ENCODE measurements at regions of chr17 and their contacts with region 1.

Region 1: DNA sequence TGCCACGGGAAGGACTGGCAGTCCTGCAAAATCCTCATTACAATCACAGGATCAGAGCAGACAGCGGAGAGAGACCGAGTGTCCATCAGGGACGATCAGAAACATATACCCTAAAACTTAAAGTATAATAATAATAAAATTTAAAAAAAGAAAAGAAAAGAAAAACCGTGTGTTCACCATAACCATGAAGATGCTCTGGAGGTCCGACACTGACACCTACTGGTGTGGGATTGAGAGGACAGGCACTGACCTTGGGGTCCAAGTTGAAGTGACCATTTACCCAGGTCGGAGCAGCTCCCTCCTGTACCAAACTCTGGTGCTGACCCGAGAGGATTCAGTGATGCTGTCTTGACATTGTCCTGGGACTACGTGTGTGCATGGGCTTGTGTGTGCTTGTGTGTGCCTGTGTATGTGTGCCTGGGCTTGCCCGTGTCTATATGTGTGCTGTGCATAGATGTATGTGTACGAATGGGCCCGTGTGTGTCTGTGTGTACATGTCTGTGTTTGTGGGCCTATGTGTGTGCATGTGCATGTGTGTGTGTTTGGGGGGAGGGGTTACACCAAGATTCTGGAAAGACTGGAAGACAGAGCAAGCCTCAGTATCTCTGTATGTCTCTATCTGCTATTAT is 10.0 kb upstream of the CD300LD start:
- DNase-seq: peak; percentile 29
- H3K4me3 ChIP-seq: no peak overlapping the region
- H3K27ac ChIP-seq: no peak overlapping the region
- H3K4me1 ChIP-seq: no peaks in the 10 kb centered on the region
- H3K27me3 ChIP-seq: no peaks in the 10 kb centered on the region
- CTCF ChIP-seq: peak; percentile 57

Region 2: GRCh38 chr17:73957564-73957963 is 644.5 kb before region 1 on chr17:
- intact Hi-C with region 1: no loop called
- DNase-seq: peak; percentile 58
- H3K4me3 ChIP-seq: no peak overlapping the region
- H3K27ac ChIP-seq: peak overlapping the region; percentile 84
- H3K4me1 ChIP-seq: peaks cover 4% of the 10 kb centered on the region
- H3K27me3 ChIP-seq: no peaks in the 10 kb centered on the region
- CTCF ChIP-seq: no peak

Region 3: DNA sequence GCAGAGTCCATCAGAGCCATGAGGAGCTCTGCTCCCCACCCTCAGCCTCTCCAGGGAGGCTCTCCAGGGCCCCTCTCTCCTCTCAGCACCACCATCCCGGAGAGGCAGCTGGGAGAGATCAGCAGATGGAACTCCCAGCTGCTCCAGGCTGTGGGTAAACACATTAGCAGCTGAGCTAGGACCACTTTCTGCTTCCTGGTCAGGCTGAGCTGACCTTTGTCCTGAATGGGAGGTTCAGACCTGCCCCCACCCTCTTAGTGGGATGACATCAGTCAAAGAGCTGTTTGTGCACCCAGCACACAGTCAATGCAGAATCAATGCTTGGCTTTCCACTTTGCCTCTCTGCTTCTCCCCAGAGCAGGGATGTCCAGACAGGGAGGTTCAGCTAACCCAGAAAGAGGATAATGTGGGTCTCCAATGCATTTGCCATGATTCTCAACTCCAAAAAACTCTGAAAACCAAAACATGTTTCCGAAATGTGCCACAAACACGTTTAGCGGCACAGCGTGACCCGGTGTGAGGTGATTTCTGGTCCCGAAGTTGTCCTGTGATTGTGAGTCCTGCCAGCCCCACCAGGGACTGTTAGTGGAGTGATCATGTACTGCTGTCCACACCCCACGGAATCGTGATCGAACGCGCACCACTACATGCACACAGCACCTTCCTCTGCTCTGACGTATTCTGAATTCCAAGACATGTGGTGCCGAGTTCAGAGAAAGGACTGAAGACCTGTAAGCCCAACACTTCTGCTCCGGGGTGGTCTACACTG is 228.0 kb before region 1 on chr17:
- intact Hi-C with region 1: loop called (anchors 5 kb)
- DNase-seq: peak; percentile 77
- H3K4me3 ChIP-seq: no peak overlapping the region
- H3K27ac ChIP-seq: peak overlapping the region; percentile 35
- H3K4me1 ChIP-seq: peaks cover 4% of the 10 kb centered on the region
- H3K27me3 ChIP-seq: no peaks in the 10 kb centered on the region
- CTCF ChIP-seq: no peak

Region 4: GRCh38 chr17:74545843-74546230 is 56.2 kb before region 1 on chr17 and contains the start of gene CD300C:
- intact Hi-C with region 1: loop called (anchors 5 kb)
- DNase-seq: peak; percentile 25
- H3K4me3 ChIP-seq: no peak within 1 kb of the TSS
- H3K27ac ChIP-seq: no peak within 1 kb of the TSS
- H3K4me1 ChIP-seq: no peaks in the 10 kb centered on the region
- H3K27me3 ChIP-seq: no peaks in the 10 kb centered on the region
- CTCF ChIP-seq: no peak
- total RNA-seq, gene CD300C: 0.35 to 1.1 TPM

Region 5: DNA sequence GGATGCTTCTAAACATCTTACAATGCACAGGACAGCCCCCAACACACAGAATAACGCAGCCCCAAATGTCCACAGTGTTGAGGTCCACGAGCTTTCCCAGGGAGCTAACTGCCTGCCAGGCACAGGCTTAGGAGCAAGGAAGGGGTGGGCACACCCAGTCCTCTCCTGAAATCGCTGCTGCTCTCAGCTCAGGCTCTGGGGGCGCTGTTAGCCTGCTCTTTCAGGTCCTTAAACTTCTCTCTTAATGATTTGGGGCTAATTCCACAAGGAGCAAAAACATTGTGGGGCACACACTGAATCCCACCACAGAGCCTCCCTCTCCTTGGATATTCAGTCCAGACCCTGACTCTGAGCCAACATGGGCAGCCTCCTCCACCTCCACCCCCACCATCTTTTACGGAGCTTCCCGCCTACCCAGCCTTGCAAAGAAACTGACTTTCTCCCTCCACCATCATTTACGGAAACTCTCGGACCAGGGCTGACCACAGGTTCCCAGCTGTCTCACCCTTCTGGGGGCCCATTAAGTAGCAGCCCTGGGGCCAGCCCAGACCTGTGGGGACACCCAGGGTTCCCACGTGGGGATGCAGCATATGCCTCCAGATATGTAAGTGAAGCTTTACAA is 35.8 kb before region 1 on chr17:
- intact Hi-C with region 1: loop called (anchors 5 kb)
- DNase-seq: peak; percentile 35
- H3K4me3 ChIP-seq: no peak overlapping the region
- H3K27ac ChIP-seq: no peak overlapping the region
- H3K4me1 ChIP-seq: no peaks in the 10 kb centered on the region
- H3K27me3 ChIP-seq: no peaks in the 10 kb centered on the region
- CTCF ChIP-seq: peak; percentile 48

Region 6: GRCh38 chr17:74671031-74671771 is 69.1 kb after region 1 on chr17:
- intact Hi-C with region 1: no loop called
- DNase-seq: peak; percentile 80
- H3K4me3 ChIP-seq: no peak overlapping the region
- H3K27ac ChIP-seq: no peak overlapping the region
- H3K4me1 ChIP-seq: no peaks in the 10 kb centered on the region
- H3K27me3 ChIP-seq: peaks cover 6% of the 10 kb centered on the region
- CTCF ChIP-seq: no peak

Measured in colonic mucosa (tissue), 4 donors.